ENCODE measurements at regions of chr1 and their contacts with region 1.

Region 1: GRCh38 chr1:15994590-15995351 is 9.3 kb upstream of the SRARP start:
- DNase-seq: peak; percentile 49
- H3K4me3 ChIP-seq: no peak overlapping the region
- H3K27ac ChIP-seq: no peak overlapping the region
- H3K4me1 ChIP-seq: no peaks in the 10 kb centered on the region
- CTCF ChIP-seq: peak; percentile 63

Region 2: DNA sequence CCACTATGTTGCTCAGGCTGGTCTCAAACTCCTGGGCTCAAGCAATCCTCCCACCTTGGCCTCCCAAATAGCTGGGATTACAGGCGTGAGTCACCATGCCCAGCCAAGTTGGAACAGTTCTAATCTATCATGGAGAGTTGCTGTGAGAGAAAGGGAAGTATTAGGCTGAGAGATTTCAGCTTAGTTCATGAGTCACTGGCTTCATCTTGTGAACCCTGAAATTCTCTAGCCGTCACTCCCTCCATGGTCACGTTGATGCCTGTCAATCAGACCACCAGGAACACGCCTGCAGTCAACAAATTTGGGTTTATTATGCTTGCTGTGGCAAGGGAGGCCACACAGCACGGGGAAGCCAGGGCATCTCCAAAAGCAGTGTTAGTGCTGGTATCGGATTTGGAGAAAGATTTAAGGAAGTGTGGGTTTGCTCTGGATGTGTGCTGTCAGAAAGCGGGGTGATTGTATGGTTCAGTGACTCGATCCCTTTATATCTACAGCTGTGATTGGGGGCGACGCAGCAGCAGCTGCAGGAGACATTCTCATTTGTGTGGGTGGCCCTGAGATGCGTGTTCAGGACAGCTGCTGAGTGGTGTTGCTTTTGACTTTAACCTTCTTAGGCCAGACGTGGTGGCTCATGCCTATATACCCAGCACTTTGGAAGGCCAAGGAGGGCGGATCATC is 206.0 kb before region 1 on chr1:
- CTCF ChIA-PET with region 1: no interaction called
- POLR2A ChIA-PET with region 1: no interaction called
- intact Hi-C with region 1: loop called (anchors 1 kb)
- DNase-seq: no peak
- H3K4me3 ChIP-seq: no peak overlapping the region
- H3K27ac ChIP-seq: no peak overlapping the region
- H3K4me1 ChIP-seq: no peaks in the 10 kb centered on the region
- CTCF ChIP-seq: no peak

Region 3: DNA sequence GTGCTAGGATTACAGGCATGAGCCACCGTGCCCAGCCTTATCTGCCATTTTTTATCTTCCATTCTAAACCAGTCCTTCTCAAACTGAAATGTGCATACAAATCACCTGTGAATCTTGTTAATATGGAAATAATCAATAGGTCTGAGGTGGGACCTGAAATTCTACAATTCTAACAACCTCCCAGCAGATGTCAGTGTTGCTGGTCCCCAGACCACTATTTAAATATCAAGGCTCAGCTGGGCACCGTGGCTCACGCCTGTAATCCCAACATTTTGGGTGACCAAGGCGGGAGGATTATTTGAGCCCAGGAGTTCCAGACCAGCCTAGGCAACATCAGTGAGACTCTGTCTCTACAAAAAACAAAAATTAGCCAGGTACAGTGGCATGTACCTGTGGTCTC is 191.4 kb before region 1 on chr1:
- CTCF ChIA-PET with region 1: no interaction called
- POLR2A ChIA-PET with region 1: no interaction called
- intact Hi-C with region 1: loop called (anchors 1 kb)
- DNase-seq: peak; percentile 63
- H3K4me3 ChIP-seq: no peak overlapping the region
- H3K27ac ChIP-seq: no peak overlapping the region
- H3K4me1 ChIP-seq: no peaks in the 10 kb centered on the region
- CTCF ChIP-seq: peak; percentile 81

Region 4: GRCh38 chr1:15885701-15886610 is 108.8 kb before region 1 on chr1:
- CTCF ChIA-PET with region 1: no interaction called
- POLR2A ChIA-PET with region 1: no interaction called
- intact Hi-C with region 1: no loop called
- DNase-seq: peak; percentile 12
- H3K4me3 ChIP-seq: no peak overlapping the region
- H3K27ac ChIP-seq: no peak overlapping the region
- H3K4me1 ChIP-seq: peaks cover 33% of the 10 kb centered on the region
- CTCF ChIP-seq: 0 out of 2 replicates have a peak, but pooled peaks have one; percentile 20

Measured in OCI-LY7 (cell line).